Panc1 (cell line): ENCODE measurements at regions of chr11 and their contacts with region 1.

Region 1: DNA sequence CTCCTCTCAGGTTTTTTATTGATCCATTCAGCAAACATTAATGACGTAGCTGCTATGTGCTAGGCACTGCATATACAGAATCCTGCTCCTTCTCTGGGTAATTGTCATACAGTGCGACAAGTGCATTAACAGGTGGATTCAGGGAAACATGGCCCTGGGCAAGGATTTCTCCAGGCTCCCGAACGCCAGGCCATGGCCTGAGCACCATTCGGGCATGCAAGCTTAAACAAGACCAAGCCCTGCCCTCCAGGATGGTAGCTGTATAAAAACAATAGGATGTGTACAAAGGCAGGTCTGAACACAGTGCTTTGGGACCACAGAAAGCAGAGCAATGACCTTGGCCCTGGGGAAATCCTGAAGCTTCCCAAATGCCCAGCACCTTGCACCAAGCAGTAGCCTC is 9.1 kb upstream of the SYT7 start:
- DNase-seq: no peak
- ATAC-seq: no peak
- H3K4me3 ChIP-seq: no peak overlapping the region
- H3K27ac ChIP-seq: no peak overlapping the region
- H3K4me1 ChIP-seq: no peaks in the 10 kb centered on the region; the same call in 1 of the 2 replicates
- H3K27me3 ChIP-seq: no peaks in the 10 kb centered on the region
- CTCF ChIP-seq: no peak

Region 2: GRCh38 chr11:61287338-61287977 is 302.5 kb before region 1 on chr11:
- CTCF ChIA-PET with region 1: no interaction called
- POLR2A ChIA-PET with region 1: interaction called, 13 read pairs
- in situ Hi-C with region 1: no loop called
- intact Hi-C with region 1: no loop called
- DNase-seq: no peak
- ATAC-seq: no peak
- H3K4me3 ChIP-seq: no peak overlapping the region
- H3K27ac ChIP-seq: no peak overlapping the region
- H3K4me1 ChIP-seq: no peaks in the 10 kb centered on the region
- H3K27me3 ChIP-seq: no peaks in the 10 kb centered on the region
- CTCF ChIP-seq: no peak